ENCODE measurements at regions of chr13 and their contacts with region 1.

Region 1: GRCh38 chr13:33723772-33724435 is 94.0 kb upstream of the RFC3 start:
- DNase-seq: peak; percentile 27 to 86 (median 50)
- ATAC-seq: peak; percentile 91
- H3K4me3 ChIP-seq: no peak overlapping the region
- H3K4me3 Mint-ChIP-seq: no peak overlapping the region
- H3K27ac ChIP-seq: no peak overlapping the region
- H3K27ac Mint-ChIP-seq: no peak overlapping the region
- H3K4me1 ChIP-seq: peaks cover 4% of the 10 kb centered on the region
- H3K4me1 Mint-ChIP-seq: peaks cover 27% of the 10 kb centered on the region
- H3K27me3 ChIP-seq: no peaks in the 10 kb centered on the region
- H3K27me3 Mint-ChIP-seq: no peaks in the 10 kb centered on the region
- CTCF ChIP-seq: peak; percentile 69

Region 2: DNA sequence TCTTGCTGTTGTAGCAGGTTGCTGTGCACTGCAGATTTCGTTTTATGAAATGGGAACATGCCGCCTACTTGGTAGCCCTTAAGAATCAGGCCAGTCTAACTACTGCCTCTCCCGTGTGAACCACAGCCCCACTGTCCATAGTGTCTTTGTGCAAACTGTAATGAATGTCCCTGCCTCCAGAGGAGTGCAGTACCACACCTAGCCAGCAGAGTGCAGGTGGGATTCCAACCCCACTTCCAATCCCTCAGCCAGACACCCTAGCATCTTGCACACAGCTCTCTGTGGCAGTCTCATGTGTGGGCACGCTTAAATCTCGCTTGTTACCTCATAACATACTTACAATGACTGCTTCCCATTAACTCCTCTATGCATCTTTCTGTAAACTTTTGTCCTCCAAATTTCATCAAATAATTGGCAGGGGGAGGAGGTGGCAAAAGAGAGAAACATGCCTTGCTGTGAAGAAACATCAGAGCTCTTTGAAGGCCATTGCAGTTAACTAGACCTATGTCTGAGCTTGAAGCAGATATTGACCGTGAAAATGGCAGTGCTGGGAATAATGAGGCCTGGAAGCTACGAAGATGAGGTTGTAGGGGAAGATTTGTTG is 1456.0 kb before region 1 on chr13:
- CTCF ChIA-PET with region 1: no interaction called
- POLR2A ChIA-PET with region 1: no interaction called
- intact Hi-C with region 1: loop called in 1 of 2 experiments (anchors 10 kb)
- DNase-seq: peak; percentile 14 to 65 (median 42)
- ATAC-seq: peak; percentile 90
- H3K4me3 ChIP-seq: no peak overlapping the region
- H3K4me3 Mint-ChIP-seq: no peak overlapping the region
- H3K27ac ChIP-seq: no peak overlapping the region
- H3K27ac Mint-ChIP-seq: no peak overlapping the region
- H3K4me1 ChIP-seq: no peaks in the 10 kb centered on the region
- H3K4me1 Mint-ChIP-seq: no peaks in the 10 kb centered on the region
- H3K27me3 ChIP-seq: no peaks in the 10 kb centered on the region
- H3K27me3 Mint-ChIP-seq: no peaks in the 10 kb centered on the region
- CTCF ChIP-seq: peak; percentile 73

Region 3: GRCh38 chr13:32468502-32469142 is 1255.3 kb before region 1 on chr13:
- CTCF ChIA-PET with region 1: no interaction called
- POLR2A ChIA-PET with region 1: no interaction called
- intact Hi-C with region 1: loop called in 1 of 2 experiments (anchors 5 kb)
- DNase-seq: no peak
- ATAC-seq: no peak
- H3K4me3 ChIP-seq: no peak overlapping the region
- H3K4me3 Mint-ChIP-seq: no peak overlapping the region
- H3K27ac ChIP-seq: no peak overlapping the region
- H3K27ac Mint-ChIP-seq: no peak overlapping the region
- H3K4me1 ChIP-seq: peaks cover 2% of the 10 kb centered on the region
- H3K4me1 Mint-ChIP-seq: peaks cover 8% of the 10 kb centered on the region
- H3K27me3 ChIP-seq: no peaks in the 10 kb centered on the region
- H3K27me3 Mint-ChIP-seq: no peaks in the 10 kb centered on the region
- CTCF ChIP-seq: no peak

Region 4: DNA sequence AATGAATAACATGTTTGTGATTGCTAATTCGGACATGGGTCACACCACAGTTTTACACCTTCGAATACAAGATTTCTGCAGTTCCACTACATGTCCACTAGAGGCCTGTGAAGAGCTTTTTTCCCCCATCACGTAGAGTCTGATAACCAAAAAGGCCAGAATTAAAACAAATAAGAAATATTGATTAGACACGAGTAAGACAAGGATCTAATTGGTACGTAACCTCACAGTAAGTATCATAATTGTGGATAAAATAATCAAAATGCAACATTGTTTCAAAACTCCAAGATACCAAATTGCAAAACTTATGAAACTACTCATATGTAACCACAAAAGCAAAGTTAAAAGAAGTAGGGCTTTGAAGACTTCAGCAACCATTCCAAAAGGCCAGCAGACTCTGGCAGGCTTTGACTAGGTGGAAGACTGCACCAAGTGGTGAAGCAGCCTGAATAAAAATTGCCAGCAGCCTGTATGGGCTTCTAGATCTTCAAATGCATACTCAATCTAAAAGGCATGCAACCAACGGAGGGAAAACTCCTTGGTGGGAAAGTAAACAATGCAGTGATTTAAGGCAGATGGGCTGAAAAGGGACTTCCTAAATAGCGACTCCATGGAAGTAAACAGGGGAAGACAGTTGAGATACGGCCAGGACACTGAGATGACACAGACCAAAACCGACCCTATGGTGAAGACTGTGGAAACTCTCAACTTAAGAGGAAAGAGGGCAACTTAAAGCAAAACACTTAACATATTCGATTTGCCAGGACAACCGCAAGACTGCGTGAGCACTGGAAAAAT is 495.1 kb before region 1 on chr13:
- CTCF ChIA-PET with region 1: interaction called, 20 read pairs
- POLR2A ChIA-PET with region 1: interaction called, 8 read pairs
- intact Hi-C with region 1: loop called (anchors 1 kb)
- DNase-seq: peak in 4 of 14 experiments; percentile 21 to 64 (median 57)
- ATAC-seq: peak; percentile 43
- H3K4me3 ChIP-seq: no peak overlapping the region
- H3K4me3 Mint-ChIP-seq: no peak overlapping the region
- H3K27ac ChIP-seq: no peak overlapping the region
- H3K27ac Mint-ChIP-seq: no peak overlapping the region
- H3K4me1 ChIP-seq: no peaks in the 10 kb centered on the region
- H3K4me1 Mint-ChIP-seq: peaks cover 5% of the 10 kb centered on the region
- H3K27me3 ChIP-seq: no peaks in the 10 kb centered on the region
- H3K27me3 Mint-ChIP-seq: no peaks in the 10 kb centered on the region
- CTCF ChIP-seq: peak; percentile 97

Region 5: DNA sequence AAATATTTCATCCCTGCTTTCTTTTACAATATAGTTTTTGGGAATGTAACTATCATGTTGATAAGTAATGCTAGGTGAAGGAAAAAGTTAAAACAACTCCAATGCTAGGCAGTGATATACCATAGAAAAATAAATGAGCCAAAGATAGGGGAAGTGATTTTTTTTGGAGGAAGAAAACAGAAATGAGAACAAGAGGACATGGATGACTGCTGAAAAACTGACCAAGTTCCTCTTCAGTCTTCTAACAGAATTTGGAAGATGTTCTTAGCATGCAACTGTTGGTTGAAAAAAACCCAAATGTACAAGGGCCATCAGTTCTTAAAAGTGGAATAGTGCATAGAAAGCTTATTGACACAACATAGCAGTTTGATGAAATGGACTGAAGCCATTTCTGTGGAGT is 175.8 kb before region 1 on chr13:
- CTCF ChIA-PET with region 1: interaction called, 5 read pairs
- POLR2A ChIA-PET with region 1: interaction called, 16 read pairs
- intact Hi-C with region 1: loop called (anchors 1 to 5 kb)
- DNase-seq: no peak
- ATAC-seq: no peak
- H3K4me3 ChIP-seq: no peak overlapping the region
- H3K4me3 Mint-ChIP-seq: no peak overlapping the region
- H3K27ac ChIP-seq: no peak overlapping the region
- H3K27ac Mint-ChIP-seq: no peak overlapping the region
- H3K4me1 ChIP-seq: peaks cover 20% of the 10 kb centered on the region
- H3K4me1 Mint-ChIP-seq: peaks cover 21% of the 10 kb centered on the region
- H3K27me3 ChIP-seq: no peaks in the 10 kb centered on the region
- H3K27me3 Mint-ChIP-seq: no peaks in the 10 kb centered on the region
- CTCF ChIP-seq: no peak

Region 6: DNA sequence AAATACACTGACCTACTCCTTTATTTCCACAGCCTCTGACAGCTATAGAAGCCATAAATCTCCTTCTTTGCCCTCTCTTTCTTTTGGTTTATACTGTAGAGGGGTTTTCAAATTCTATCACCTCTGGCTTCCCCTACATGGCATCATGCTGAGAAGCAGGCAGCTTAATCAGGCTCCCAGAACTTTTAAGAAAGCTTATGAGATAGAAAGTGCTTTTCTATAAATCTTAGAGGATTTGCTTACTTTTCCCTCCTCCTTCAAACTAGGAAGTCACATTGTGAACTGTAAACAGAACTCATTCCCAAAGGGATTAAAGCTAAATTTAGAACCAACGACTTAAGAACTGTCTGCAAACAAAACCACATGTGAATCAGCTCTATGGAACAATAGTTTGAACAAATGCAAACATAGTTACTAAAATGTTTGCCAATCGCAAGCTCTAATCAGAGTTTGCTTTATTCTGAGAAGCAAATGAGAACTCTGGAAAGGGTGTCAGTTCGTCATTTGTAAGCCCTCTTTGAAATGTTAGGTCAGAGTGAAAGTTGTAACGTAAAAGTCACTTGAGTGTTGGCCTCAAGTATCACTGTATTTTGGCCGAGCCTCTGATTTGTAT is 438.1 kb after region 1 on chr13:
- CTCF ChIA-PET with region 1: no interaction called
- POLR2A ChIA-PET with region 1: no interaction called
- intact Hi-C with region 1: no loop called
- DNase-seq: no peak
- ATAC-seq: no peak
- H3K4me3 ChIP-seq: no peak overlapping the region
- H3K4me3 Mint-ChIP-seq: no peak overlapping the region
- H3K27ac ChIP-seq: no peak overlapping the region
- H3K27ac Mint-ChIP-seq: no peak overlapping the region
- H3K4me1 ChIP-seq: no peaks in the 10 kb centered on the region
- H3K4me1 Mint-ChIP-seq: peaks cover 2% of the 10 kb centered on the region
- H3K27me3 ChIP-seq: no peaks in the 10 kb centered on the region
- H3K27me3 Mint-ChIP-seq: peaks cover 25% of the 10 kb centered on the region
- CTCF ChIP-seq: no peak